Right ventricle myocardium inferior (tissue), 1 donor: ENCODE measurements at regions of chr19 and their contacts with region 1.

Region 1: GRCh38 chr19:50537762-50538230 is 24.1 kb upstream of the ASPDH start:
- DNase-seq: peak; percentile 82
- ATAC-seq: peak; percentile 80

Region 2: GRCh38 chr19:50777754-50778303 is 240.0 kb after region 1 on chr19:
- intact Hi-C with region 1: loop called (anchors 2 kb)
- DNase-seq: no peak
- ATAC-seq: no peak